Activated B cell treated with CpG ODN at 0.5 μM for 24 hours (primary cell): ENCODE measurements at regions of chr7 and their contacts with region 1.

Region 1: GRCh38 chr7:98202367-98203195 is 8.7 kb upstream of the BHLHA15 start:
- DNase-seq: peak; percentile 81
- ATAC-seq: peak; percentile 87
- H3K4me3 Mint-ChIP-seq: peak overlapping the region; percentile 80
- H3K27ac Mint-ChIP-seq: peak overlapping the region; percentile 86
- H3K4me1 Mint-ChIP-seq: peaks cover 57% of the 10 kb centered on the region
- H3K27me3 Mint-ChIP-seq: peaks cover 3% of the 10 kb centered on the region
- CTCF ChIP-seq: no peak

Region 2: GRCh38 chr7:97117372-97118188 is 1085.0 kb before region 1 on chr7 and contains the start of gene SDHAF3:
- CTCF ChIA-PET with region 1: no interaction called
- POLR2A ChIA-PET with region 1: interaction called, 4 read pairs
- intact Hi-C with region 1: loop called (anchors 1 kb)
- DNase-seq: peak; percentile 96
- ATAC-seq: peak; percentile 87
- H3K4me3 Mint-ChIP-seq: peak within 1 kb of the TSS; percentile 95
- H3K27ac Mint-ChIP-seq: peak within 1 kb of the TSS; percentile 96
- H3K4me1 Mint-ChIP-seq: peaks cover 41% of the 10 kb centered on the region
- H3K27me3 Mint-ChIP-seq: no peaks in the 10 kb centered on the region
- CTCF ChIP-seq: no peak
- total RNA-seq, gene SDHAF3: 20.6 and 24.2 TPM in 2 replicates

Region 3: DNA sequence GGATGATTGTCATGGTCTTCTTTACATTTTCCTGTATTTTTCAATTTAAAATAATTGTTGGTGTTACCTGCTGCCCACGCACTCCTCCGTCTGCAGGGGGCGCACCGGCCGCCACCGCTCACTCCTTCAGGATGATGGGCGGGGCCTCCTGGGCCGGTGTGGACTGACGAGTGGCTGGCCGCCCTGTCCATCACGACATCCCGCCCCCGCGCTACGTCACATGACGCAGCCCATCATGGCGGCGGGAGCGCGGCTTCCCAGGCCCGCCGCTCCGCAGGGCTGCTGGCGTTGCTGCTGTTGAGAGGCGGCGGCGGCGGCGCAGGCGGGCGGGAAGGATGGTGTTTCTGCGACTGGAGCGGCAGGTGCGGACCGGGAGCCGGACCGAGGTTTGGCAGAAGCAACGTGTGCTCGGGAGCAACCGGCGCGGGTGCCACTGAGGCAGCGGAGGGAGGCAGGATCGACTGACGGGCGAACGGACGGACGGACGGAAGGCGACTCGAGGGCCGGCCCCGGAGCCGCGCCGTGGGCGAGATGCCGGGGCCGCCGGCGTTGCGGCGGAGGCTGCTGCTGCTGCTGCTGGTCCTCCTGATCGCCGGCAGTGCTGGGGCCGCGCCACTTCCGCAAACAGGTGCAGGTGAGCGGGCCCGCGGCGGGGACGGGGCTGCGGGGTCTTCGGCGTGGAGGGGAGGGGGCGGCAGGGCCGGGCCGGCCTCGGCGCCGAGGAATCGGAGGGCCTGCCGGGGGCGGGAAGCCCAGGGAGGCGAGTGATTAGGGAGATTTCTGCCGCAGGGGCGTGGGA is 95.7 kb before region 1 on chr7 and contains the start of gene LMTK2:
- CTCF ChIA-PET with region 1: interaction called, 3 read pairs
- POLR2A ChIA-PET with region 1: interaction called, 5 read pairs
- intact Hi-C with region 1: loop called (anchors 1 kb)
- DNase-seq: peak; percentile 99
- ATAC-seq: peak; percentile 100
- H3K4me3 Mint-ChIP-seq: peak within 1 kb of the TSS; percentile 97
- H3K27ac Mint-ChIP-seq: peak within 1 kb of the TSS; percentile 86
- H3K4me1 Mint-ChIP-seq: peaks cover 16% of the 10 kb centered on the region
- H3K27me3 Mint-ChIP-seq: peaks cover 8% of the 10 kb centered on the region
- CTCF ChIP-seq: peak; percentile 80
- total RNA-seq, gene LMTK2: 9.6 and 10.4 TPM in 2 replicates

Region 4: GRCh38 chr7:98178347-98178746 is 24.2 kb before region 1 on chr7:
- CTCF ChIA-PET with region 1: no interaction called
- POLR2A ChIA-PET with region 1: no interaction called
- intact Hi-C with region 1: no loop called
- DNase-seq: no peak
- ATAC-seq: no peak
- H3K4me3 Mint-ChIP-seq: no peak overlapping the region
- H3K27ac Mint-ChIP-seq: no peak overlapping the region
- H3K4me1 Mint-ChIP-seq: no peaks in the 10 kb centered on the region
- H3K27me3 Mint-ChIP-seq: no peaks in the 10 kb centered on the region
- CTCF ChIP-seq: no peak

Region 5: GRCh38 chr7:98217623-98218582 is 15.3 kb after region 1 on chr7:
- CTCF ChIA-PET with region 1: no interaction called
- POLR2A ChIA-PET with region 1: no interaction called
- intact Hi-C with region 1: loop called (anchors 1 kb)
- DNase-seq: no peak
- ATAC-seq: peak; percentile 53
- H3K4me3 Mint-ChIP-seq: peak overlapping the region; percentile 21
- H3K27ac Mint-ChIP-seq: no peak overlapping the region
- H3K4me1 Mint-ChIP-seq: peaks cover 21% of the 10 kb centered on the region
- H3K27me3 Mint-ChIP-seq: no peaks in the 10 kb centered on the region
- CTCF ChIP-seq: no peak

Region 6: GRCh38 chr7:98280791-98281756 is 78.5 kb after region 1 on chr7 and contains the start of gene BRI3:
- CTCF ChIA-PET with region 1: no interaction called
- POLR2A ChIA-PET with region 1: interaction called, 6 read pairs
- intact Hi-C with region 1: loop called (anchors 1 kb)
- DNase-seq: peak; percentile 86
- ATAC-seq: peak; percentile 82
- H3K4me3 Mint-ChIP-seq: peak within 1 kb of the TSS; percentile 86
- H3K27ac Mint-ChIP-seq: peak within 1 kb of the TSS; percentile 75
- H3K4me1 Mint-ChIP-seq: peaks cover 36% of the 10 kb centered on the region
- H3K27me3 Mint-ChIP-seq: no peaks in the 10 kb centered on the region
- CTCF ChIP-seq: no peak
- total RNA-seq, gene BRI3: 53.7 and 55.9 TPM in 2 replicates

Region 7: GRCh38 chr7:98409843-98410242 is 207.3 kb after region 1 on chr7:
- CTCF ChIA-PET with region 1: no interaction called
- POLR2A ChIA-PET with region 1: no interaction called
- intact Hi-C with region 1: no loop called
- DNase-seq: no peak
- ATAC-seq: no peak
- H3K4me3 Mint-ChIP-seq: no peak overlapping the region
- H3K27ac Mint-ChIP-seq: no peak overlapping the region
- H3K4me1 Mint-ChIP-seq: peaks cover 2% of the 10 kb centered on the region
- H3K27me3 Mint-ChIP-seq: peaks cover 14% of the 10 kb centered on the region
- CTCF ChIP-seq: no peak

Region 8: GRCh38 chr7:98434095-98434494 is 231.5 kb after region 1 on chr7:
- CTCF ChIA-PET with region 1: no interaction called
- POLR2A ChIA-PET with region 1: no interaction called
- intact Hi-C with region 1: no loop called
- DNase-seq: no peak
- ATAC-seq: no peak
- H3K4me3 Mint-ChIP-seq: no peak overlapping the region
- H3K27ac Mint-ChIP-seq: no peak overlapping the region
- H3K4me1 Mint-ChIP-seq: peaks cover 10% of the 10 kb centered on the region
- H3K27me3 Mint-ChIP-seq: peaks cover 14% of the 10 kb centered on the region
- CTCF ChIP-seq: no peak

Region 9: GRCh38 chr7:98870121-98870651 is 667.6 kb after region 1 on chr7:
- CTCF ChIA-PET with region 1: no interaction called
- POLR2A ChIA-PET with region 1: interaction called, 8 read pairs
- intact Hi-C with region 1: loop called (anchors 2 kb)
- DNase-seq: peak; percentile 85
- ATAC-seq: peak; percentile 98
- H3K4me3 Mint-ChIP-seq: peak overlapping the region; percentile 85
- H3K27ac Mint-ChIP-seq: peak overlapping the region; percentile 63
- H3K4me1 Mint-ChIP-seq: peaks cover 20% of the 10 kb centered on the region
- H3K27me3 Mint-ChIP-seq: peaks cover 5% of the 10 kb centered on the region
- CTCF ChIP-seq: no peak